ENCODE measurements at regions of chr9 and their contacts with region 1.

Region 1: DNA sequence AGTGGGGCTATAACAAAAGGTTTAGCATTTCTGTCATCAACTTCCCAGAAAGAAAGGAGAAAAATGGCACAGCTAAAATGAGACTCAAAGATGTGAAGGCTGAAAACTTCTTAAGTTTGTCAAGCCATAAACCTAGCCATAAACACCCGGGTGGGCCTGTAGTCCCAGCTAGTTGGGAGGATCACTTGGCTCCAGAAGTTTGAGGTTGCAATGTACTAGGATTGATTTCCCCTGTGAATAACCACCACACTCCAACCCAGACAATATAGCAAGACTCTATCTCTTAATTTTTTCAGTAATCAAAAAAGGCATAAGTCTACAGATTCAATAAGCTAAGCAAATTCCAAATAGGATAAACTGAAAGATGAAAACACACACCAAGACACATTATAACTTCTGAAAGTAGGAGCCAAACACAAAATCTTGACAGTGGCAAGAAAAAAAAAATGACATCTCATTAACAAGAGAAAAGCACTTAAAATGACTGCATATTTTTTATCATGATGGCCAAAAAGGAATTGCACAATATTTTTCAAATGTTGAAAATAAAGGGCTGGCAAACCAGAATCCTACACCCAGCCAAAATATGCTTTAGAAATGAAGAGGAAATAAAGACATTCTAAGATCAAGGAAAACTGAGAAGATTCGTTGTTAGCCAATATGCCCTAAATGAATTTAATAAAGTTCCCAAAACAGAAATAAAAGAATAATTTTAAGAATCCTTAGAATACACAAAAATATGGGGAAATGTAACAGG is 308.4 kb downstream of the BRINP1 start:
- DNase-seq: no peak
- ATAC-seq: peak; percentile 65 to 66
- H3K4me3 ChIP-seq: no peak overlapping the region
- H3K27ac ChIP-seq: peak overlapping the region in 2 of 4 donors; percentile 2 to 7
- H3K4me1 ChIP-seq: no peaks in the 10 kb centered on the region
- H3K27me3 ChIP-seq: no peaks in the 10 kb centered on the region
- CTCF ChIP-seq: no peak
- POLR2A ChIP-seq: no peak

Region 2: GRCh38 chr9:119252671-119253299 is 192.0 kb after region 1 on chr9:
- in situ Hi-C with region 1: no loop called
- intact Hi-C with region 1: loop called (anchors 5 kb)
- DNase-seq: no peak
- ATAC-seq: no peak
- H3K4me3 ChIP-seq: no peak overlapping the region
- H3K27ac ChIP-seq: no peak overlapping the region
- H3K4me1 ChIP-seq: no peaks in the 10 kb centered on the region
- H3K27me3 ChIP-seq: no peaks in the 10 kb centered on the region
- CTCF ChIP-seq: no peak
- POLR2A ChIP-seq: no peak

Region 3: DNA sequence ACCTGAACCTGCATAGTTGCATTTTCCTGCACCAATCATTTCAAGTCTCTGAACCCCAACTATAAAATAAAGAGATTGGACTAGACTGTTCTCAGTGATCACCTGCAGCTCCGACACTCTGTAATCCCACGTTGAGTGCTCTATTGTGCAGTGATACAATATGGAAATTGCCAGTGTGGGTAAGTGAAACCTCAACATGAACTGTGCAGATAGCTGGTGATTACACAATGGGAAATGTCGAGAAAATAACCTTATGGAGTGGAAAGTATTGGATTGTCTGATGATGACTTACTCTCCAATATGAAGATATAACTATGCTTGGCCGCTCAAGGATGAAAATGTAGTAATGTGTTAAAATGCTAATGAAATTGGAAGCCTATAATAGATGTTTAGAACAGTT is 601.5 kb after region 1 on chr9:
- in situ Hi-C with region 1: no loop called
- intact Hi-C with region 1: no loop called
- DNase-seq: no peak
- ATAC-seq: no peak
- H3K4me3 ChIP-seq: no peak overlapping the region
- H3K27ac ChIP-seq: no peak overlapping the region
- H3K4me1 ChIP-seq: no peaks in the 10 kb centered on the region
- H3K27me3 ChIP-seq: no peaks in the 10 kb centered on the region
- CTCF ChIP-seq: no peak
- POLR2A ChIP-seq: no peak

Measured in gastrocnemius medialis (tissue), 4 donors.